GM13977 (cell line): ENCODE measurements at regions of chr6 and their contacts with region 1.

Region 1: DNA sequence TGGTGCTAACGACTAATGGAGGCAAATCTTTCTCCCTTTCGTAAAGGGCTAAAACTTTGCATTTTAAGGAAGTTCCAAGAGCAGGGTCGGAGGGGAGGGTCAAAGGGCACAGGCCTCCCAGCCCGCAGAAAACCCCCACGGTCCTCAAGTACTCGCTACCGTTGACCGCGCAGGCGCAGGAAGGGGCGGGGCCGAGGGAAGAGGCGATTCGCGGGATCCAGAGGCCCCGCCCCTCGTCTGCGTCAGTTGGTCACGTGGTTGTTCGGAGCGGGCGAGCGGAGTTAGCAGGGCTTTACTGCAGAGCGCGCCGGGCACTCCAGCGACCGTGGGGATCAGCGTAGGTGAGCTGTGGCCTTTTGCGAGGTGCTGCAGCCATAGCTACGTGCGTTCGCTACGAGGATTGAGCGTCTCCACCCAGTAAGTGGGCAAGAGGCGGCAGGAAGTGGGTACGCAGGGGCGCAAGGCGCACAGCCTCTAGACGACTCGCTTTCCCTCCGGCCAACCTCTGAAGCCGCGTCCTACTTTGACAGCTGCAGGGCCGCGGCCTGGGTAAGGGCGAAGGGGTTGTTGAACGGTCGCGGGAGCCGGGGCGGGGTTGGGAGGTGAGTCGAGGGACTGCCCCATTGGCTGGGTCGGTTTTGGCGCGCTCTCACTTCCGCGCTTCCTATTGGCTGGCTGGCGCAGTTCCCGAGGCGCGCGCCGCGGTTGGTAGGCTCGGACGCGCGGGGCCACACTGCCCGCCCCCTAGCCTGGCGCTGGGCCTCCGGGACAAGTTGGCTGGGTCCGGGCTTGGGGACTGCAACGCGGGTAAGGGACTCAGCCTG is at the start of gene GMNN:
- DNase-seq: peak; percentile 94
- CTCF ChIP-seq: no peak

Region 2: GRCh38 chr6:24720604-24721460 is 54.1 kb before region 1 on chr6:
- in situ Hi-C with region 1: loop called (anchors 10 kb)
- DNase-seq: peak; percentile 96
- CTCF ChIP-seq: no peak

Region 3: DNA sequence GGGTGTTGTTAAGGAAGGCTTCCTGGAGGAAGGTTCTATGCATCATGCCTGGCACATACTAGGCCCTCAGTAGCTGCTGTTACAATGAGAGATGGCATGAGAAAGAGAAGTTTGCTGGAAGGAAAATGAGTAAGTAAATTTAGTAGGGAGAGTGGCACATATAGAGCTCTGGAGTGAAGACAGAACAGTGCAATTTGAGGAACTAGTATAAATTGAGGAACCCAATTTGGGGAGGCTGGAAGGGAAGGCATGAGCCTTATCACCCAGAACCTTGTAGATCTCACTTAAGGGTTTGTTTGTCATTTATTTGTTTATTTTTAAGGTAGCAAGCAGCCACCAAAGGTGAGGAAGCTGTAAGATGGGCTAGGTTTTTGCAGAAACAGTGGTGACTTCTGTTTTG is 790.0 kb after region 1 on chr6:
- in situ Hi-C with region 1: no loop called
- DNase-seq: no peak
- CTCF ChIP-seq: no peak